Left lung (tissue), 14 donors: ENCODE measurements at regions of chr1 and their contacts with region 1.

Region 1: DNA sequence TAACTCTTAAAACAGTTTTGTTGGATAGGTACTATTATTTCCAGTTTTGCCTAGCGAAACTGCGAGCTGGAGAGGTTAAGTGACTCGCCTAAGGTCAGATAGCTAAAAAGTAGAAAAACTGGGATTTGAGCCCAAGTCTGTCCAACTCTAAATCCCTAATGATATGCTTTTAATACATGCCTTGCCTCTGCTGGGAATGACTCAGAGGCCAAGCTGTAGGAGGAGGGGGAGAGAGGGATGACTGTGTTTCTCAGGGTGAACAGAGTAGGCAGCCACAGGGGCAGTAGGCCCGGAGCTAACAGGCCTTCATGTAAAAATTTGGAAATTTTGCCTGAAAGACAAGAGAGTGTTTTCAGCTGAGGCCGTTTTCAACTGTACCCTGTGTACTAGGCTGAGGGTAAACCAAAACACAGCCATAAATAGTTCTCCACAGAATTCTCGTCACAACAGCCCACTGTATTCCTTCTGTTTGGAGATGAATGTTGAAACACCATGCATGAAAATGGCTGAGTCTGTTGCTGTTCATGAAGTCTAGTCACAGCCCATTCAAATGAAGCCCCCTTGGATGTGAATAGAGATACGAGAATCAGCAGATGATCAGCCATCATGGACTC is 107.5 kb upstream of the HOOK1 start:
- DNase-seq: peak in 2 of 4 donors; percentile 40 to 49
- ATAC-seq: peak; percentile 77
- H3K4me3 ChIP-seq: no peak overlapping the region
- H3K27ac ChIP-seq: peak overlapping the region; percentile 10 to 55
- H3K4me1 ChIP-seq: peaks cover 7 to 22% of the 10 kb centered on the region in 2 donors
- H3K27me3 ChIP-seq: no peaks in the 10 kb centered on the region
- CTCF ChIP-seq: no peak

Region 2: GRCh38 chr1:58755468-58755872 is 951.8 kb before region 1 on chr1:
- intact Hi-C with region 1: loop called in 1 of 2 experiments (anchors 10 kb)
- DNase-seq: peak in 2 of 4 donors; percentile 28 to 71
- ATAC-seq: peak; percentile 90
- H3K4me3 ChIP-seq: no peak overlapping the region
- H3K27ac ChIP-seq: peak overlapping the region; percentile 67 to 70
- H3K4me1 ChIP-seq: peaks cover 7 to 32% of the 10 kb centered on the region in 2 donors
- H3K27me3 ChIP-seq: no peaks in the 10 kb centered on the region
- CTCF ChIP-seq: no peak

Region 3: GRCh38 chr1:59609245-59609644 is 98.0 kb before region 1 on chr1:
- intact Hi-C with region 1: no loop called
- DNase-seq: no peak
- ATAC-seq: no peak
- H3K4me3 ChIP-seq: no peak overlapping the region
- H3K27ac ChIP-seq: no peak overlapping the region
- H3K4me1 ChIP-seq: no peaks in the 10 kb centered on the region
- H3K27me3 ChIP-seq: no peaks in the 10 kb centered on the region
- CTCF ChIP-seq: no peak

Region 4: DNA sequence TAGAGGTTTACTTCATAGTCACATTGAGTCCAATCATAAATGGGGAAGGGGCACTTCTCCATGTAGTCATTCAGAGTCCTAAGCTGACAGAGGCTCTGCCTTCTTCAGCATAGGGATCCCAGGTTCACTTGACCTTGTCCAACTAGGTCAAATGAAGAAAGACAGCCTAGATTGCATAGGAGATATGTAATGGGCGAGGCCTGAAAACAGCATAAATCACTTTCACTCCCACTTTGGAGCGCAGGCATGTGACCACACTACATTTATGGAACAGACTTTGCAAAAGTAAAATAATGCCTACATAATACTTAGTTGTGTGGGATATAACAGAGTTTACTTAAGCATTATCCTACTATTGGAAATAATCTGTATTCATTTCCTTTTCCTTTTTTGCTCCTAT is 159.2 kb after region 1 on chr1:
- intact Hi-C with region 1: no loop called
- DNase-seq: no peak
- ATAC-seq: no peak
- H3K4me3 ChIP-seq: no peak overlapping the region
- H3K27ac ChIP-seq: no peak overlapping the region
- H3K4me1 ChIP-seq: no peaks in the 10 kb centered on the region
- H3K27me3 ChIP-seq: no peaks in the 10 kb centered on the region
- CTCF ChIP-seq: no peak